ENCODE measurements at regions of chr12 and their contacts with region 1.

Region 1: GRCh38 chr12:42790761-42791151 is 201.2 kb upstream of the PRICKLE1 start:
- DNase-seq: peak; percentile 30 to 46
- H3K4me3 ChIP-seq: no peak overlapping the region
- H3K4me3 Mint-ChIP-seq: no peak overlapping the region
- H3K27ac Mint-ChIP-seq: no peak overlapping the region
- H3K4me1 ChIP-seq: peaks cover 31% of the 10 kb centered on the region
- H3K4me1 Mint-ChIP-seq: peaks cover 13% of the 10 kb centered on the region
- H3K27me3 ChIP-seq: no peaks in the 10 kb centered on the region
- H3K27me3 Mint-ChIP-seq: no peaks in the 10 kb centered on the region
- CTCF ChIP-seq: no peak

Region 2: DNA sequence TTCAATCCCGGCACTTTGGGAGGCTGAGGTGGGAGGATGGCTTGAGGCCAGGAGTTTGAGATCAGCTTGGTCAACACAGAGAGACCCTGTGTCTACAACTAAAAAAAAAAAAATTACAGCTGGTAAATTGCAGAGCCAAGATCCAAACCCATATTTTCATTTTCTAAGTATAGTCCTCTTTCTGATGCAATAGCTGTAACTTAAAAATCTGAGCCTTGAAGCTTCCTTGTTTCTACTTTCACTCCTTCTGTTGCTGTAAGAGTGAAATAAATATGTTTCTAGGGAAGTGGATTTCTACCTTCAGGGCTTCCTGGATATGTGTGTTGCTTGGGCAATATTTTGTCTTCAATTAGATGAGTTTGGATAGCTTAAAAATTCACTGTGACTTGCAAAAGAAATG is 159.2 kb before region 1 on chr12:
- CTCF ChIA-PET with region 1: no interaction called
- POLR2A ChIA-PET with region 1: no interaction called
- intact Hi-C with region 1: no loop called
- DNase-seq: no peak
- H3K4me3 ChIP-seq: no peak overlapping the region
- H3K4me3 Mint-ChIP-seq: no peak overlapping the region
- H3K27ac Mint-ChIP-seq: no peak overlapping the region
- H3K4me1 ChIP-seq: no peaks in the 10 kb centered on the region
- H3K4me1 Mint-ChIP-seq: peaks cover 19% of the 10 kb centered on the region
- H3K27me3 ChIP-seq: no peaks in the 10 kb centered on the region
- H3K27me3 Mint-ChIP-seq: no peaks in the 10 kb centered on the region
- CTCF ChIP-seq: no peak

Region 3: DNA sequence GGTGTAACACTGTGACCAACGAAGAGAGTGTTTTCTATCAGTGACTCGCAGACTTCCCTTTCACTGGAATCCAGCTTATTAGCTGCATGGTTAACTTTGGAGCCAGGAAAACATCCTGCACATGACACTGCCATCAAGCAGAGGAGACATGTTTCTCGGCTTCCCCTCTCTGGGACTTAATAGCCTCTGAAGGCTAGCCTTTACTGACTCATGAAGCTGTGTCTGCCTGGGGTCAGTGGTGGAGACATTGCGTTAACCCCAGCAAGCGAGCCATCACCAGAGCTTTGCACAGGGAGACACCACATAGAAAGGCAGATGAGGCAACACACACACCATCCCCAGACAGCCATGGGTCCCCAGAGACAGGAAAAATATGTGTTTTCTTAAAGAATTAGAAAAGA is 74.3 kb before region 1 on chr12:
- CTCF ChIA-PET with region 1: no interaction called
- POLR2A ChIA-PET with region 1: no interaction called
- intact Hi-C with region 1: no loop called
- DNase-seq: no peak
- H3K4me3 ChIP-seq: no peak overlapping the region
- H3K4me3 Mint-ChIP-seq: no peak overlapping the region
- H3K27ac Mint-ChIP-seq: no peak overlapping the region
- H3K4me1 ChIP-seq: no peaks in the 10 kb centered on the region
- H3K4me1 Mint-ChIP-seq: no peaks in the 10 kb centered on the region
- H3K27me3 ChIP-seq: no peaks in the 10 kb centered on the region
- H3K27me3 Mint-ChIP-seq: no peaks in the 10 kb centered on the region
- CTCF ChIP-seq: no peak

Region 4: DNA sequence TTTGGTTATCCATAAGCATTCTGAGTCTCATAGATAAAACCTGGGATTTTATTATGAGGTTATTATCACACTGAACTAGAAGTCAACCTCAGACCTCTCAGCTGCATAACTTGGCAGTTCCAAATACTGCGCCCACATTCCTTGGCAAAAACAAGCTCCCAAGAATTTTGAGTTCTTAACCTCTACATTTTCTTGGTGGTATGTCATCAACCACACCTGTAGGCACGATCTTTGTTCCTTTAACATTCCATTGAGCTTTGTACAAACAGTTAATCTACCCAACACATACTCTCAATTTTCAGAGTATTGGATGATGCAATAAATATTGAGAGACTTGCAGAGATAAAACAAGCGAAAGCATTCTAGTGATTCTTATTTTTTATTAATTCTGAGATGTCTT is 170.6 kb after region 1 on chr12:
- CTCF ChIA-PET with region 1: no interaction called
- POLR2A ChIA-PET with region 1: no interaction called
- intact Hi-C with region 1: loop called (anchors 10 kb)
- DNase-seq: peak; percentile 80 to 91
- H3K4me3 ChIP-seq: no peak overlapping the region
- H3K4me3 Mint-ChIP-seq: no peak overlapping the region
- H3K27ac Mint-ChIP-seq: peak overlapping the region; percentile 88
- H3K4me1 ChIP-seq: peaks cover 43% of the 10 kb centered on the region
- H3K4me1 Mint-ChIP-seq: peaks cover 22% of the 10 kb centered on the region
- H3K27me3 ChIP-seq: no peaks in the 10 kb centered on the region
- H3K27me3 Mint-ChIP-seq: no peaks in the 10 kb centered on the region
- CTCF ChIP-seq: no peak